ENCODE measurements at regions of chr4 and their contacts with region 1.

Region 1: GRCh38 chr4:18593445-18594002 is 572.0 kb upstream of the LCORL start:
- DNase-seq: peak in 8 of 10 donors; percentile 47 to 79 (median 55)
- H3K4me3 ChIP-seq: peak overlapping the region in 37 of 59 donors; percentile 1 to 55 (median 15)
- H3K27ac ChIP-seq: peak overlapping the region in 24 of 59 donors; percentile 5 to 63 (median 36)
- H3K27me3 ChIP-seq: peaks cover 0 to 3% (median 0%) of the 10 kb centered on the region in 45 donors
- CTCF ChIP-seq: peak; percentile 83 to 96 (median 91)

Region 2: DNA sequence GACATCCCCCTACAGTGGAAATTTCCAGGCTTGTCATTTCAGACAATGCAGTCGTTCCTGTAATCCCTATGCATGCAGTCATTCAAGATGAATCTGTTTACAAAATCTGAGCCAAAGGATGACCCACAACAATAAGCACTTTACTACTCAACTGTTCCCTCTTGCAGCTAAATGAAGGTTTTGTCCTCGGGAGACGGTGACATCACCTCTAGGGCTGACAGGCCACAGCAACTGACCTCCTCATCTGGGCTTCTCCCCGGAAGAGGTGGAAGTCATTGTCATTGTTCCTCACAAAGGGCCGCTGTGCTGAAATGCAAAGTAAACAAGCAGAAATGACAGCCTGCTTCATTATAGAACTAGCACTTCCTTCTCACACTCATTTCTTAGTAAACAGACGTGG is 1049.3 kb before region 1 on chr4:
- intact Hi-C with region 1: loop called in 1 of 2 experiments (anchors 10 kb)
- DNase-seq: peak; percentile 23 to 94 (median 87)
- H3K4me3 ChIP-seq: peak overlapping the region in 2 of 59 donors; percentile 18 to 21
- H3K27ac ChIP-seq: peak overlapping the region; percentile 66 to 100 (median 95)
- H3K27me3 ChIP-seq: no peaks in the 10 kb centered on the region
- CTCF ChIP-seq: peak in 4 of 56 donors; percentile 6 to 23 (median 20)

Region 3: GRCh38 chr4:17552427-17552826 is 1041.1 kb before region 1 on chr4:
- intact Hi-C with region 1: loop called (anchors 10 kb)
- DNase-seq: no peak
- H3K4me3 ChIP-seq: no peak overlapping the region
- H3K27ac ChIP-seq: peak overlapping the region in 19 of 59 donors; percentile 6 to 98 (median 47)
- H3K27me3 ChIP-seq: no peaks in the 10 kb centered on the region
- CTCF ChIP-seq: no peak

Region 4: DNA sequence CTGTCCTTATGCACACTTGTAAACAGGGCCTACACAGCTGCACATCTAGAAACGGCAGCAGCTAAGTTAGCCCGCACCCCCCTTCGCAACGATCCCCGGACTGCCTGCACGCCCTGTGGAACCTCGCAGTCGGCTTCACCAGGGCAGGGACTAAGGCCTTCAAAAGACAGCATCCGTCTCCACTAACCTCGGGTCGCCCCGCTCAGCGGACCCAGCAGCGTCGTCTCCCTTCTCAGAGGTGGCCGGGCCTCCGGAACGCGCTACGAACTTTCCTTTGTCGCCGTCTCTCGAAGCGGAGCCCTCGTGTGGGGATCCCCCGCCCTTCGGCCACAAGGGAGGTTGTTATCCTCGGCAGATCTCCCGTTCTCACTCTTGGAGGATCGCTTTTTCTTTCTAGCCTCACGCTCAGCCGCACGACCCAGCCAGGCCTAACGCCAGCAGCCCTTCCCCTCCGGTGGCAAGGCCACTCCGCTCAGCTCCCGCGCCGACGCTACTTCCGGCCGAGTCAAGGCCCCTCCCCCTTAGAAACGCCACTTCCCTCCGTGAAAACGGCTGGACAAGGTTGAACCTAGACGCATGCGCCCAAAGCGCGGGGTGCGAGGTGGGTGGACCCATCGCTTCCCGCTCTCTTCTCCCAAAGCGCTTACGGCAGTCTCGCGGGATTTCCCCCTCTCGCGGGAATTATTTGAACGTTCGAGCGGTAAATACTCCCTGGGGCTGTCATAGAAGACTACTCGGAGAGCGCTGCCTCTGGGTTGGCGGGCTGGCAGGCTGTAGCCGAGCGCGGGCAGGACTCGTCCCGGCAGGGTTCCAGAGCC is 783.1 kb before region 1 on chr4 and contains the starts of genes DCAF16 and NCAPG:
- intact Hi-C with region 1: loop called in 1 of 2 experiments (anchors 5 kb)
- DNase-seq: peak; percentile 99 to 100 (median 100)
- H3K4me3 ChIP-seq: peak within 1 kb of the TSS; percentile 56 to 98 (median 90)
- H3K27ac ChIP-seq: peak within 1 kb of the TSS; percentile 23 to 96 (median 90)
- H3K27me3 ChIP-seq: no peaks in the 10 kb centered on the region
- CTCF ChIP-seq: peak in 33 of 56 donors; percentile 2 to 62 (median 32)
- total RNA-seq, gene DCAF16: 24.8 to 77.9 (median 45.8) TPM
- total RNA-seq, gene NCAPG: 0.12 to 1.8 (median 0.44) TPM in 73 of 120 experiments, not detected in the others

Region 5: GRCh38 chr4:17817020-17817419 is 776.5 kb before region 1 on chr4:
- intact Hi-C with region 1: loop called (anchors 2 to 5 kb)
- DNase-seq: no peak
- H3K4me3 ChIP-seq: peak overlapping the region in 1 of 59 donors; percentile 5
- H3K27ac ChIP-seq: no peak overlapping the region
- H3K27me3 ChIP-seq: no peaks in the 10 kb centered on the region
- CTCF ChIP-seq: peak; percentile 16 to 83 (median 68)

Region 6: DNA sequence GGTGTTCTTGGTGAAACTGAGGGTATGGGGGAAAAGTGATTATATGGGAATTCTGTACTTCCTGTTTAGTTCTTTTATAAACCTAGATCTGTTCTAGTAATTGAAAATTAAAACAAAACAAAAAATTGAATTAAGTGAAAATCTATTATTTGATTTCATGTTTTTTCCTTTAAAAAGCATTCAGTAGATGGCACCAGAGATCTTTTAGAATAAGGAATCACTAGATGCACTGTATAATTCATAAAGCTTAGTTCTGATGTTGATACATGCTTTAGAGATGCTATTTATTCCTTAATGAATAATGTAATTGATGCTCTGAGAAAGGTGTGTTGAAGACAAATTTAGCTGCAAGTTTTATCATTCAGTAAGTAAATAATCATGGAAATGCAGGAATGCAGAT is 659.2 kb before region 1 on chr4:
- intact Hi-C with region 1: loop called in 1 of 2 experiments (anchors 5 kb)
- DNase-seq: no peak
- H3K4me3 ChIP-seq: no peak overlapping the region
- H3K27ac ChIP-seq: no peak overlapping the region
- H3K27me3 ChIP-seq: no peaks in the 10 kb centered on the region
- CTCF ChIP-seq: peak in 48 of 56 donors; percentile 10 to 68 (median 37)

Region 7: DNA sequence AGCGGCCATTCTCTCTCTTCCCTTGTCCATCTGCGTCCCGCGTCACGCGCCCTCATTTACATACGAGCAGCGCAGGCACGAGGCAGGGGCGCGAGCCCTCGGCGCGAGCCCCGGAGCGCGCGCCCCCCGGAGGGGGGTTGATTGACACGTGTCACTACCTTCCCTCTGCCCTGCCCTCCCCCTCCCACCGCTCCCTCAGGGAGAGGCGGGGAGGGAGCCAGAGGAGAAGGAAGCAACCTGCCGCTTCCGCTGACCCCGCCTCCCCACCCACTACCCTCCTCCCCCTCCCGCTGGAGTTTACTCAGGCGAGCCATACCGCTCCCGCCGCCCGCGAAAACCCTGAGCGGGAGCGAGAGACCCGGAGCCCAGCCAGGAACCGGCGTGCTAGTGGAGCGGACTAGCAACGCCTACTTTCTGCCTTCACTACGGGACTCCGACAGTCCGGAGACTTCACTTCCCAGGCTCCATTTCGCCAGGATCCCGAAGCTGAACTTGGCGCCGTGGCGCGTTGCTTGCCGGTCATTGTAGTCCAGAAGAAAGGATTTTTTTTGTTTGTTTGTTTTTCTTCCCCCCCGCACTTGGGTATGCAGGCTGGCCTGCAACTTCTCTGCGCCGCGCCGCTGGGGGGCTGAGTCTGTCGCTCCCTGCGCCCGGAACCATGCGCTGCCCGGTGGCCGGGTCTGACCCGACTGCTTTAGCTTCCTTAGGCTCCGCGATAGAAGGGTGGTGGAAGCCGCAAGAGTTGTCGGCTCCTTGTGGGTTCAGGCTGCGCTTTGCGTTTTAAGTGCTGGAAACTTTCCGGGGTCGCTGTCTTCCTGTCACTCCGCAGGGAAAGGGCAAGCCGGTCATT is 571.6 kb before region 1 on chr4 and contains the start of gene LCORL:
- intact Hi-C with region 1: loop called (anchors 5 kb)
- DNase-seq: peak; percentile 82 to 97 (median 94)
- H3K4me3 ChIP-seq: peak within 1 kb of the TSS; percentile 68 to 99 (median 93)
- H3K27ac ChIP-seq: peak within 1 kb of the TSS; percentile 66 to 98 (median 94)
- H3K27me3 ChIP-seq: no peaks in the 10 kb centered on the region
- CTCF ChIP-seq: peak in 25 of 56 donors; percentile 5 to 46 (median 26)
- total RNA-seq, gene LCORL: 8.6 to 31.3 (median 18.1) TPM